Activated CD4-positive, alpha-beta memory T cell treated with anti-CD3 and anti-CD28 coated beads, Interleukin-2, amount 10 ng/mL, durations not matched to agents 7 days and 5 days (primary cell): ENCODE measurements at regions of chr12 and their contacts with region 1.

Region 1: GRCh38 chr12:6764011-6764828 is 1.9 kb upstream of the PTMS start:
- DNase-seq: peak; percentile 71
- H3K4me3 Mint-ChIP-seq: peak overlapping the region; percentile 38
- H3K27ac Mint-ChIP-seq: no peak overlapping the region
- H3K4me1 Mint-ChIP-seq: peaks cover 42% of the 10 kb centered on the region
- H3K27me3 Mint-ChIP-seq: peaks cover 46% of the 10 kb centered on the region

Region 2: DNA sequence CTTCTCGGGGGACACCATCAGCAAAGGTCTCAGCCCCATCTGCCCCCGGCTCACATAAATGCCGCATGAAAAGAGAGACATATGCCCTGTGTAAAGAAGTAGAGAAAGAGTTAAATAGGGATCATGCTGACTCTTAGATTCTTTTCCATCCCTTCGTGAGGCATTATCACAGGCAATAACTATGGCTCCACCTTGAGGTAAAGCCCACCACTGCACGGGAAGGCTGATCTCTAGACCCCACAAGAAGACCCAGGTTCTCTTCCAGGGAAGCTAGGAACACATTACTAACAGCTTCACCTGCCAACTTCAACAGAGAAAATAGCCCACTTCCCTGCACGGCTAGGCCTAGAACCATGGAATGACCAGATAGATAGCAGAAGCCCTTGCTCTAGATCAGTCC is 182.0 kb before region 1 on chr12:
- CTCF ChIA-PET with region 1: no interaction called
- POLR2A ChIA-PET with region 1: no interaction called
- DNase-seq: no peak
- H3K4me3 Mint-ChIP-seq: no peak overlapping the region
- H3K27ac Mint-ChIP-seq: no peak overlapping the region
- H3K4me1 Mint-ChIP-seq: peaks cover 4% of the 10 kb centered on the region
- H3K27me3 Mint-ChIP-seq: no peaks in the 10 kb centered on the region

Region 3: DNA sequence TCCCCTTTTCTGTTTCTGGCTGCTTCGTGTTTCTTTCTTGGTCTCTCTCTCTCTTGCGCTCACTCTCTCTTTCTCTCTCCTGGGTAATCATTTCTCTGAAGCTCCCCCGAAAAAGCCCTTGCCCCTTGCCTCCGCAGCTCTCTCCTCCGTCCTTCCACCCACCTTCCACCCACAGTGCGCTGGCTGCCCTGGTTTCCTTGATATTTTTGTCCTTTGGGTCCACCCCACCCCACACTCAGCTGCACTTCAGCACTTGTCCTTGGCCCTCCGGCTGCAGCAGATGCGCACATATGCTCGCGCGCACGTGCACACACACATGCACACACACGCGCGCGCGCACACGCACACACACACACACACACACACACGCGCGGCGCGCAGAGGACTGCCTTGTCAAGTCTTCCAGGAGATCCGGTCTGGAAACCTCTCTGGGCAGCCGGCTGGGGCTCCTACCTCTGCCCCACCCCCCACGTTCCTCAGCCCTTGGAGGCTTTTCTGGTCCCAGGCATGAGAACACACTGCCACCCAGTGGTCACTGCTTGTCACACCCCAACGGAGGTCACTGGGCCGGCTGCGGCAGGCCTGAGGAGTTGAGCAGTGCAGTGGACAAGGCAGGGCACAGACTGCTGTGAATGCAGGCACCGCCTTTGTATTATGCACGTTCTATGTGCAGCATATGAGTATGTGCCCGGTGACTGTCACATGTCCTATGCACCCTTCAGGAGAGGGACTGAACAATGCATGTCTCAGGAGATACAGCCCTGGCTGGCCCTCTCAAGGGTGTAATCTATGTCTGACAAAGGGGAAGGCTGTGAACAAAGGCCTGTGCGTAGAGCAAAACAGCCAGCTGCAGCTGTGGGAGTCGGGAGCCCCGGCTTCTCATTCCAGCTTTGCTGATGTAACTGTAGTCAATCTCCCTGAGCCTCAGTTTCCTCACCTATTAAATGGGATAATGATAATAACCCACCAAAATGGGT is 14.6 kb after region 1 on chr12:
- CTCF ChIA-PET with region 1: interaction called, 64 read pairs
- POLR2A ChIA-PET with region 1: interaction called, 10 read pairs
- DNase-seq: peak; percentile 91
- H3K4me3 Mint-ChIP-seq: peak overlapping the region; percentile 71
- H3K27ac Mint-ChIP-seq: peak overlapping the region; percentile 74
- H3K4me1 Mint-ChIP-seq: peaks cover 68% of the 10 kb centered on the region
- H3K27me3 Mint-ChIP-seq: peaks cover 6% of the 10 kb centered on the region

Region 4: GRCh38 chr12:6786416-6787094 is 22.3 kb after region 1 on chr12:
- CTCF ChIA-PET with region 1: interaction called, 64 read pairs
- POLR2A ChIA-PET with region 1: interaction called, 153 read pairs
- DNase-seq: no peak
- H3K4me3 Mint-ChIP-seq: peak overlapping the region; percentile 33
- H3K27ac Mint-ChIP-seq: peak overlapping the region; percentile 74
- H3K4me1 Mint-ChIP-seq: peaks cover 50% of the 10 kb centered on the region
- H3K27me3 Mint-ChIP-seq: no peaks in the 10 kb centered on the region